ENCODE measurements at regions of chr6 and their contacts with region 1.

Region 1: GRCh38 chr6:26156076-26156849 is 69.0 kb downstream of the HFE start:
- DNase-seq: peak; percentile 88

Region 2: GRCh38 chr6:26031595-26032339 is 124.5 kb before region 1 on chr6:
- CTCF ChIA-PET with region 1: no interaction called
- POLR2A ChIA-PET with region 1: interaction called, 243 read pairs
- DNase-seq: peak; percentile 85

Region 3: GRCh38 chr6:26122793-26123674 is 33.2 kb before region 1 on chr6:
- CTCF ChIA-PET with region 1: interaction called, 4 read pairs
- POLR2A ChIA-PET with region 1: interaction called, 822 read pairs
- DNase-seq: peak; percentile 71

Region 4: DNA sequence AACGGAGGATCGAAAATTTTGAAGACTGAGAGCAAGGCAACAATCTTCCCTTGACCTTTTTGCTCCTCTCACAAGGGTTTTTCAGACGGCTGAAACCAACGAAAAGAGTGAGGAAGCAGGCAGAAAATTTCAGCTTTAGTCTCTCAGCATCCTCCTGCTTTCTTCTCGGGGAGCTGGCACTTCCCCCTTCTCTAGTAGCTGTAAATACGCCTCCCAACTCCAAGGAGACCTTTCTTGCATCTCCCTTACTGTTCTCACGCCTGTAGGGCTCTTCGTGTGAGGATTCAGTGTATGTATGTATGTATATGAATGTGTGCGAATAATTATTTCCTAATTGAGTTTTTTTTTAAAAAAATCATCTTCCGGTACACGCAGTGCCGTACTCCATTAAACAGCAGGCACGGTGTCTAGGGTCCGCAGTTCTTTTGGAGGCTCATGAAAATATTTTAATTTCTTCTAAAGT is 16.3 kb after region 1 on chr6:
- CTCF ChIA-PET with region 1: no interaction called
- POLR2A ChIA-PET with region 1: interaction called, 125 read pairs
- DNase-seq: no peak

Region 5: DNA sequence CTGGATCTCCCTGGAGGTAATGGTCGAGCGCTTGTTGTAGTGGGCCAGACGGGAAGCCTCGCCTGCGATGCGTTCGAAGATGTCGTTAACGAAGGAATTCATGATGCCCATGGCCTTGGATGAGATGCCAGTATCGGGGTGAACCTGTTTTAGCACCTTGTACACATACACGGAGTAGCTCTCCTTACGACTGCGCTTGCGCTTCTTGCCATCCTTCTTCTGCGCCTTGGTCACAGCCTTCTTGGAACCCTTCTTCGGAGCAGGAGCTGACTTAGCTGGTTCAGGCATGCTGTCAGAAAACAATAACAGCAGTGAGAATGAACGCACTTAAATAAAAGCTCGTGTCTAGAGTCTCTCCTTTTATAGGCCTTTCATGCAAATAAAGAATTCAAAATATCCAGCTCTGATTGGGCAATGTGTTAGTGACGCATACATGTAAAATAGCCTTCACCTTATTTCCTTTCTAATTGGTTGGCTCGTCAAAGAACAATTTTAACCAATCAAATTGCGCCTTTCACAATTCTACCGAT is 60.2 kb after region 1 on chr6:
- CTCF ChIA-PET with region 1: no interaction called
- POLR2A ChIA-PET with region 1: interaction called, 45 read pairs
- DNase-seq: no peak

Region 6: DNA sequence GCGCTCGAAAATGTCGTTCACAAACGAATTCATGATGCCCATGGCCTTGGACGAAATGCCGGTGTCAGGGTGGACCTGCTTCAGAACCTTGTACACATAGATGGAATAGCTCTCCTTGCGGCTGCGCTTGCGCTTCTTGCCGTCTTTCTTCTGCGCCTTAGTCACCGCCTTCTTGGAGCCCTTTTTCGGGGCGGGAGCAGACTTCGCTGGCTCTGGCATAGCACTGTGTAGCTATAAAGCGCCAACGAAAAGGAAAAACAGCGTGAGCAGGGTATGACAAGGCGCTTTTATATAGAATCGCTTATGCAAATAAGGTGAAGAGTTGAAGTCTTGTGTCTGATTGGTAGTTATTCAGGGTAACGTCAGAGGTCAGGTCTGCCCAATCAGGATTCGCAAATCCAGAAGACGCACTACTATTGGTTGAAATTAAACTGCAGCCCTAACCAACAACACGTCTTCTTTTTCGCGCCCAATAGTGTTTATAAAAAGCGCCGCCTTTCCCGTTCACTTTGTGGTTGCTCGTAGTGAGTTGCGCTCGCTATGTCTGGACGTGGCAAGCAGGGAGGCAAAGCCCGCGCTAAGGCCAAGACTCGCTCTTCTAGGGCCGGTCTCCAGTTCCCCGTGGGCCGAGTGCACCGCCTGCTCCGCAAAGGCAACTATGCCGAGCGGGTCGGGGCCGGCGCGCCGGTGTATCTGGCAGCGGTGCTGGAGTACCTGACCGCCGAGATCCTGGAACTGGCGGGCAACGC is 976.4 kb after region 1 on chr6:
- CTCF ChIA-PET with region 1: no interaction called
- POLR2A ChIA-PET with region 1: interaction called, 40 read pairs
- DNase-seq: peak; percentile 85

Region 7: GRCh38 chr6:27893059-27893835 is 1737.0 kb after region 1 on chr6:
- CTCF ChIA-PET with region 1: no interaction called
- POLR2A ChIA-PET with region 1: interaction called, 28 read pairs
- DNase-seq: peak; percentile 86